ENCODE measurements at regions of chr3 and their contacts with region 1.

Region 1: DNA sequence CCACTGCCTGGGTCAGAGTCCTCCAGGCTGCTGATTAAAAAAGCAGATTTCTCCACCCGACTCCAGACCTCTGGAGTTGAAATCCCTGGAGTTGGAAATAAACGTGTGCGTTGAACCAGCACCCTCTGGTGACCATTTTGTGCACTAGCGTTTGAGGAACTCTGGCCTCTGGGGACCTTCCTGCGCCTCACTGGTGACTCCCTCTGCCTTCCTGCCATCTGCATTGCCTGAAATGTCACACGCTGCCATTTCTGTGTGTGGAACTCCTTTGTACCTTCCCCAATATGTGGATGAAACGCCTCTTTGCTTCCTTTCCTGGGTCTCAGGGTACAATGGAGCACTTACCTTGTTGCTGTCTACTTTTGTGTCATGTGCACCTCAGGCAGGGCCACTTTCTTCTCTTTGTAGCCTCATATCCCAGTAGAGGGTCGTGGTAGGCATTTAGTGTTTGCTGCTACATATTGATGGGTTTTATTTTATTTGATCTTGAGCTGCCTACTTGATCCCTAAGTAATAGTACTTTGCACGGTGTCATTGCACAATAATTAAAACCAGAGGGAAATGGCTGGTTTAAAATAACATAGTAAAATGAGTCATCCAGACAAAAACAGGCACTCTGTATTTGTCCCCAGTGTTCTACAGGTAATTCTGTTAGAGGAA is 56.8 kb downstream of the GPR171 start:
- DNase-seq: peak; percentile 65
- H3K4me3 ChIP-seq: no peak overlapping the region
- H3K27ac ChIP-seq: no peak overlapping the region
- H3K4me1 ChIP-seq: peaks cover 8% of the 10 kb centered on the region
- H3K27me3 ChIP-seq: peaks cover 11 to 15% of the 10 kb centered on the region in 2 experiments
- CTCF ChIP-seq: peak; percentile 86 to 87
- POLR2A ChIP-seq: no peak

Region 2: DNA sequence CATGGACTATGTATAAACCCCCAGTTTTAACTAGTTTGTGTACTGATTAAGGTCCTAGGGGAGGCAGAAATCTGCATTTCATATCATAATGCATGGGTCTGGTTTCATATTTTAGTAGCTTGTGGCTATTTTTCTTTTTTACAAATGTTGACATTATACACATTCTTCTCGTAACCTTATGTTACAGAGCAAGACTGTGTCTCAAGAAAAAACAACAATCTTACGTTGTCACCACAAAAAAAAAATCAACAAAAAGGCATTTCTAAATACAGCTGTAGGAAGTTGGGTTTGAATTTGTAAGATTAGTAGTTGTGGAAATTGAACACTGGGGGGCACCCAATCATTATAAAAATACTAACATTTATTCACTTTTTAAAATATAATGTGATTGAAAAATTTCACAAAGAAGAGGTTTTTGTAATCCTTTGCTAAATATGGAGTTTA is 617.8 kb before region 1 on chr3:
- CTCF ChIA-PET with region 1: no interaction called
- POLR2A ChIA-PET with region 1: no interaction called
- dilution Hi-C with region 1: no loop called
- intact Hi-C with region 1: loop called (anchors 2 kb)
- DNase-seq: peak; percentile 49
- H3K4me3 ChIP-seq: no peak overlapping the region
- H3K27ac ChIP-seq: no peak overlapping the region
- H3K4me1 ChIP-seq: no peaks in the 10 kb centered on the region
- H3K27me3 ChIP-seq: peaks cover 0 to 2% of the 10 kb centered on the region in 2 experiments
- CTCF ChIP-seq: peak in 1 of 2 donors; percentile 8
- POLR2A ChIP-seq: no peak

Region 3: GRCh38 chr3:150787741-150788370 is 358.3 kb before region 1 on chr3:
- CTCF ChIA-PET with region 1: interaction called, 25 read pairs
- POLR2A ChIA-PET with region 1: no interaction called
- dilution Hi-C with region 1: no loop called
- intact Hi-C with region 1: loop called (anchors 1 kb)
- DNase-seq: peak; percentile 60
- H3K4me3 ChIP-seq: no peak overlapping the region
- H3K27ac ChIP-seq: no peak overlapping the region
- H3K4me1 ChIP-seq: peaks cover 5% of the 10 kb centered on the region
- H3K27me3 ChIP-seq: peaks cover 16 to 24% of the 10 kb centered on the region in 2 experiments
- CTCF ChIP-seq: peak; percentile 86 to 93
- POLR2A ChIP-seq: no peak

Region 4: GRCh38 chr3:150925751-150926201 is 220.4 kb before region 1 on chr3:
- CTCF ChIA-PET with region 1: interaction called, 37 read pairs
- POLR2A ChIA-PET with region 1: no interaction called
- dilution Hi-C with region 1: no loop called
- intact Hi-C with region 1: loop called (anchors 1 kb)
- DNase-seq: peak; percentile 16
- H3K4me3 ChIP-seq: no peak overlapping the region
- H3K27ac ChIP-seq: no peak overlapping the region
- H3K4me1 ChIP-seq: no peaks in the 10 kb centered on the region
- H3K27me3 ChIP-seq: peaks cover 5 to 11% of the 10 kb centered on the region in 2 experiments
- CTCF ChIP-seq: peak; percentile 62 to 73
- POLR2A ChIP-seq: no peak

Region 5: DNA sequence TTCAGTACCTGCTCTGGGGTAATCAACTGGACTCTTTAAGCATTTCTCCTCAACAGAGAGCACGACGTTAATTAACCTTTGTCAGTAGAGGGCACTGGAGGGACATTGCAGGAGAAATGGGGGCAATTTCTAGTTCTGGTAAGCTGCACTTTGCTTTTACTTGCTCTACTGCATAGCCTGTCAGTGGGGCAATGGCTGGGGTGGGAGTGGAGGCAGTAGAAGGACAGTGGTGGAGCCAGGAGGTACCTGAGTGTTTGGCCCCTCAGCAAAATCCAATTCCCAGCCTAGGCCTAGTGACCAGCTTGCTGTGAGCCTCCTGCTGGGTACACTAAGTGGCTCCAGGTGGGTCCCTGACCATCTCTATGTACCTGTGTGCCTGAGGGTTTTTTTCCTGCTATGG is 79.0 kb before region 1 on chr3:
- CTCF ChIA-PET with region 1: interaction called, 4 read pairs
- POLR2A ChIA-PET with region 1: no interaction called
- dilution Hi-C with region 1: no loop called
- intact Hi-C with region 1: loop called (anchors 1 kb)
- DNase-seq: no peak
- H3K4me3 ChIP-seq: no peak overlapping the region
- H3K27ac ChIP-seq: no peak overlapping the region
- H3K4me1 ChIP-seq: no peaks in the 10 kb centered on the region
- H3K27me3 ChIP-seq: peaks cover 4% of the 10 kb centered on the region in 2 experiments
- CTCF ChIP-seq: peak in 1 of 2 donors; percentile 17
- POLR2A ChIP-seq: no peak

Measured in endothelial cell of umbilical vein (primary cell).